Dorsolateral prefrontal cortex (tissue), 120 donors: ENCODE measurements at regions of chr7 and their contacts with region 1.

Region 1: GRCh38 chr7:105876091-105876963 is at the start of gene ATXN7L1:
- DNase-seq: peak; percentile 88 to 96 (median 92)
- H3K4me3 ChIP-seq: peak within 1 kb of the TSS; percentile 66 to 94 (median 85)
- H3K27ac ChIP-seq: peak within 1 kb of the TSS in 58 of 59 donors; percentile 19 to 94 (median 86)
- H3K27me3 ChIP-seq: no peaks in the 10 kb centered on the region
- CTCF ChIP-seq: peak in 46 of 56 donors; percentile 4 to 80 (median 48)
- total RNA-seq, gene ATXN7L1: 17.9 to 47.7 (median 29.0) TPM

Region 2: GRCh38 chr7:105522062-105522936 is 354.0 kb before region 1 on chr7 and contains the start of gene PUS7:
- intact Hi-C with region 1: loop called in 1 of 2 experiments (anchors 5 kb)
- DNase-seq: peak; percentile 76 to 90 (median 85)
- H3K4me3 ChIP-seq: peak within 1 kb of the TSS; percentile 59 to 95 (median 81)
- H3K27ac ChIP-seq: peak within 1 kb of the TSS; percentile 36 to 97 (median 89)
- H3K27me3 ChIP-seq: no peaks in the 10 kb centered on the region
- CTCF ChIP-seq: peak in 37 of 56 donors; percentile 6 to 71 (median 31)
- total RNA-seq, gene PUS7: 9.3 to 22.2 (median 14.4) TPM

Region 3: DNA sequence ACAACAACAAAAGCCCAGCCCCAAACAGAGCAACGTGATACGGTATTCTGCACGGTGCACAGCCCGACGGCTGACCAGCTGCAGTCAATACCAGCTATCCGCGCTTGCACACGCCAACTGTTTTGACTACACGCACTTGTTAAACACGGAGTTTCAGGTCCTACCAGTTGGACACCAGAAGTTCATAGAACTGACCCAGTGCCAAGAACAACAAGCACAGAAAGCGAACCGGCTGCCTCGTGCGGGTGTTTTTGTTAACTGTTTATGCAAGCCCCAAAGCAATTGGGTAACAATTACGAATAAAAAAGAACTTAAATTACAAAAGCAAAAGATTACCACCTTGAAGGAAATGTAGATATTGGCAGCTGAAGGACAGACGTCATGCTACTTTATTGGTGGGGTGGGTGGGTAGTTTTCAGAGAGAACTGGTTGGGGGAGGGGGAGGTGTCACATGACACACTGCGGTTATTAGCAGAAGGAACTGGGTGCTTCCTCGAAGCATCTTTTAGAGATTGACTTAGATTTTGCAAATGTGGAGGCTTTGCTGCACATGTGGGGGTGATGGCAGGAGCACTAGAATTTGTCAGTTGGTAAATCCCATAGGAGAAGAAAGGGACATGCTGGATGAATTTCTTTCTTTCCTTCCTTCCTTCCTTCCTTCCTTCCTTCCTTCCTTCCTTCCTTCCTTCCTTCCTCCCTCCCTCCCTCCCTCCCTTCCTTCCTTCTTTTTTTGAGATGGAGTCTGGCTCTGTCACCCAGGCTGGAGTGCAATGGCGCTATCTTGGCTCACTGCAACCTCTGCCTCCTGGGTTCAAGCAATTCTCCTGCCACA is 184.4 kb before region 1 on chr7:
- intact Hi-C with region 1: loop called in 1 of 2 experiments (anchors 10 kb)
- DNase-seq: peak in 6 of 10 donors; percentile 33 to 55 (median 50)
- H3K4me3 ChIP-seq: peak overlapping the region; percentile 27 to 73 (median 59)
- H3K27ac ChIP-seq: peak overlapping the region in 31 of 59 donors; percentile 1 to 75 (median 45)
- H3K27me3 ChIP-seq: no peaks in the 10 kb centered on the region
- CTCF ChIP-seq: no peak

Region 4: DNA sequence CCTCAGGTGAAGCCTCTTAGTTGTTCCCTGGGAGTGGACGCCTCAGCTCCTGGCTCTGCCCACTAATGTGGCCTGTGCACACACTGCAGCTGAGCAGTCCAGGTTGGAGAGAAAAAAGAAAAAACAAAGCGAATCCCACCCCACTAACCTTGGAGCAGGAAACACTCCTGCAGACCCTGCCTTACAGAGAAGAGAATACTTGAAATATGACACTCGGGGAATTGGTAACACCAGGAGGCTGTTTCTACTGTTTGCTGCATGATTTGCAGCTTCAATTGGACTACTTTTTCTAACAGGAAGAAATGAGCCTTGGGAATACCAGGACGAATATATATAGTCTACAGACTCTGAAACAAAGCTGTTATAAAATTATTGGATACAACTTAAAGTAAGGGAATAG is 108.9 kb after region 1 on chr7:
- intact Hi-C with region 1: loop called in 1 of 2 experiments (anchors 5 kb)
- DNase-seq: no peak
- H3K4me3 ChIP-seq: no peak overlapping the region
- H3K27ac ChIP-seq: no peak overlapping the region
- H3K27me3 ChIP-seq: peaks cover 0 to 6% (median 0%) of the 10 kb centered on the region in 45 donors
- CTCF ChIP-seq: no peak

Region 5: DNA sequence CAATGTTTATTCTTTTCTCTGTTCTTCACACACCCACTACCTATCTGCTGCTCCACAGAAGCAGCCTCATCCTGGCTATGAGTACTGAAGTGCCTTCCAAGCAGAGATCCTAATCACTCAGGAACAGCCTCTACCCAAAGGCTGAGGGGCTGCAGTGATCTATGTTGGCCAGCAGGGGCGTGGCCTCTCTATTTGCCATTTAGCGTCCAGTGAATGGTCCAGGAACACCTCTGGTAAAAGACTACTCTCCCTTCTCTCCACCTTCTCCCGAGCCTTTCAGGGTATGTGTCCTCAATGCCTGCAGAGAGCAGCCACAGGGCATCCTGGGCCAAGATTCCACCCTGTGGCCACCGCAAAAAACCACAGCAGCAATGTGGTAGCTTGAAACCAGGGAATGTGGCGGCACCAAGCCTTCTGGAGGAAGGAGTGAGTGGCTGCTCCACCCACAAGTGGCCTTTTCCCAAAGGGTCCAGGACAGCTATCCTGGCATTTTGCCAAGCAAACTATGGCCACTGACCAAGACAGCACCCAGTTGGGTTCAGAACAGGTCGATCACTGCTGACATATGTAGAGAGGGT is 164.9 kb after region 1 on chr7:
- intact Hi-C with region 1: loop called in 1 of 2 experiments (anchors 10 kb)
- DNase-seq: peak in 2 of 10 donors; percentile 53
- H3K4me3 ChIP-seq: no peak overlapping the region
- H3K27ac ChIP-seq: no peak overlapping the region
- H3K27me3 ChIP-seq: peaks cover 0 to 3% (median 0%) of the 10 kb centered on the region in 45 donors
- CTCF ChIP-seq: peak; percentile 17 to 78 (median 64)